Activated CD4-positive, alpha-beta memory T cell treated with anti-CD3 and anti-CD28 coated beads for 36 hours (primary cell): ENCODE measurements at regions of chr3 and their contacts with region 1.

Region 1: DNA sequence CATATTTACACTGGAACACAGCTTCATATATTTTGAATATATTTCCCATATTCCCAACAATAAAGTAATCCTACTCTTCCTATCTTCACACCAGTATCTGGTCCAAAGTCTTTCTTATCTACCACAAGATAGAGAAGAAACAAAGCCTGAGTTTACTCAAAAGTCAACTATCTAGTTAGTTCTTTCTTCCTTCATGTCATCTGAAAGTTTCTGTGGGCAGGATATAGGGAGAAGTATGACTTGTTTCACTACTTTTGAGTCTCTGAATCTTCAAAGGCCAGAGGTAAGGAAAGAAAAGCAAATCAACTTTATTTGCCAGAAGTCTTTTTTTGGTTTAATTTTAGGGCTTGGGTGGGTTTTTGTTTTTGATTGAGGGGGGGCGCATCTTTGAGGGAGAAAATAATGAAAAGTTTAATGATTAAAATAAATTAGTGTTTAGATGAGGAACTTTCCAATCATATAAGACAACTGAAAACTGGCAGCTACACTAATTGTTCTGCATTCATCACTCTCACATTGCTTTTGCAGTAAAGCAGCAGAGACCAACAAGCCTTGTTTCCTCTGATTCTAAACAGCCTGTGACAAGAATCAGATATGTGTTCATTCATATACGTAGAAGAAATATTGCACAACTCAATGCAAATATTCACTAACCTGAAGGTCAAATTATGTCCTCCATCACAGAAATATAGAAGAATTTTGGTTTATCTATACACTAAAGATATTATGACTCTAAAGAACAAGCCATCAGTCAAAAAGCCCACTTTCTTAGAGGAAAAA is 421.4 kb downstream of the SHQ1 start:
- DNase-seq: no peak
- H3K4me3 Mint-ChIP-seq: peak overlapping the region; percentile 23
- H3K27ac Mint-ChIP-seq: peak overlapping the region; percentile 82
- H3K4me1 Mint-ChIP-seq: peaks cover 78% of the 10 kb centered on the region
- H3K27me3 Mint-ChIP-seq: no peaks in the 10 kb centered on the region

Region 2: GRCh38 chr3:72123908-72124441 is 302.8 kb before region 1 on chr3:
- CTCF ChIA-PET with region 1: no interaction called
- POLR2A ChIA-PET with region 1: no interaction called
- intact Hi-C with region 1: no loop called
- DNase-seq: peak; percentile 73
- H3K4me3 Mint-ChIP-seq: no peak overlapping the region
- H3K27ac Mint-ChIP-seq: no peak overlapping the region
- H3K4me1 Mint-ChIP-seq: peaks cover 13% of the 10 kb centered on the region
- H3K27me3 Mint-ChIP-seq: no peaks in the 10 kb centered on the region

Region 3: DNA sequence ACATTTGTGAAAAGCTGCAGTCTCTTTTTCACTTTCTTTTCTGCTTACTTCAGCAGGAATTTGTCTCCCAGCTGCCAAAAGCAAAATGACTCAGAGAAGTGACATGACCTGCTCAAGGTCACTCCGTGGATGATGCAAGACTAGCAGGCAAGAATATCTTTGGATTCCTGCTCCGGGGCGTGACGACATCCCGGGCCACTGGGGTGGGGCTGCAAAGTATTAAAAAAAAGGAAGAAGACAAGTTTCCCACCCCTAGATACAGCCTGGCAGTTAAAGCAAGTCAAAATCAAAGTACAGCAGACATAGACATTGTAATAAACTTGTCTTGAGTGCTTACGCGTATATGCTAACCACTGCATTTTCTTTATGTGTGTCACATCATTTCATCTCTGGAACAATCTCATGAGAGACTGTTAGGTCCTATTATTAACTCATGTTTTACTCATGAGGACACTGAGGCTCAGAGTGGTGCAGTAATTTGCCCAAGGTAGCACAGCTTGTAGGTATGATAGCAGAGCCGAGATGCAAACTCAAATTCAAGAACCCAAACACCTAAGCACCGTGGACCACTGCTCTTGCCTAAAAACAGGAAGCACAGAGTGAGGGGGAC is 156.6 kb before region 1 on chr3:
- CTCF ChIA-PET with region 1: no interaction called
- POLR2A ChIA-PET with region 1: no interaction called
- intact Hi-C with region 1: loop called (anchors 5 kb)
- DNase-seq: peak; percentile 47
- H3K4me3 Mint-ChIP-seq: no peak overlapping the region
- H3K27ac Mint-ChIP-seq: peak overlapping the region; percentile 64
- H3K4me1 Mint-ChIP-seq: peaks cover 55% of the 10 kb centered on the region
- H3K27me3 Mint-ChIP-seq: peaks cover 1% of the 10 kb centered on the region

Region 4: DNA sequence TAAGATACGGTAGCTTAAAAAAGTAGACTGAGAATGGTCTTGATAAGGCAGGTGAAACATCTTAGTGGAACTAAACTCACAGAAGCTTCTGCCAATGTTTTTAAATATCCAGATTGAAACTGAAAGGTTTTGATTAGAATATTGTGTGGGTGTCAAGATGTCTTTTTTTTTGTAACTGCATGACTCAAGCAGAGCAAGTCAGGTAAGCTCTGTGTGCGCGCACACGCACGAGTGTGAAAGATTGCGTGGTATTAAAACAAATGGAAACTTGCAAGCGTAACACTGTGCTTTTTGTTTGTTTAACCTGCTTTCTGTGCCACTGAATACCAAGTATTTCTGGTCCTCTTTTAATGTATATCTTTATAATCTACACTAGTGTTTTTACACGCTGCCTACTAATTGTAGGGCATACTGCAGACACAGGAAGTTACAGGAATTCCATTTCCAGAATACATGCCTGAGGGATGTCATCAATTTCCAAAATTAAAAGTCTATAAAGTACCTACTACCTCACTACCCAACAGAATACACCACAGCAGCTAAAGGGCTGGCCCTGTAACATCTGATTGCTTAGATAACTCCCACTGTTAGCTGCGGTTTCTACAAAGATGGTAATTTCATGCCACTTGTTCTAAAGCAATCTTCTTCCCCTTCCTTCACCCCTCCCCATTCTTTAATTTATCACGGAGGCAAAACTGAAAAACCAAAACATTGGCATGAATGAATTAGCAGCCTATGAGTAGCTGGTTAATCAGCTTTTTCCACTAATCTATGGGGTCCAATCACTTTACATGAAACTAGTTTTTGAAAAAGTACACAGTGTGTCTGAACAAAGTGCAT is 51.4 kb before region 1 on chr3:
- CTCF ChIA-PET with region 1: interaction called, 3 read pairs
- POLR2A ChIA-PET with region 1: no interaction called
- intact Hi-C with region 1: loop called (anchors 2 kb)
- DNase-seq: peak; percentile 70
- H3K4me3 Mint-ChIP-seq: peak overlapping the region; percentile 6
- H3K27ac Mint-ChIP-seq: peak overlapping the region; percentile 86
- H3K4me1 Mint-ChIP-seq: peaks cover 65% of the 10 kb centered on the region
- H3K27me3 Mint-ChIP-seq: no peaks in the 10 kb centered on the region

Region 5: GRCh38 chr3:72413228-72413627 is 13.6 kb before region 1 on chr3:
- CTCF ChIA-PET with region 1: no interaction called
- POLR2A ChIA-PET with region 1: interaction called, 6 read pairs
- intact Hi-C with region 1: loop called (anchors 1 kb)
- DNase-seq: no peak
- H3K4me3 Mint-ChIP-seq: no peak overlapping the region
- H3K27ac Mint-ChIP-seq: no peak overlapping the region
- H3K4me1 Mint-ChIP-seq: peaks cover 84% of the 10 kb centered on the region
- H3K27me3 Mint-ChIP-seq: no peaks in the 10 kb centered on the region

Region 6: DNA sequence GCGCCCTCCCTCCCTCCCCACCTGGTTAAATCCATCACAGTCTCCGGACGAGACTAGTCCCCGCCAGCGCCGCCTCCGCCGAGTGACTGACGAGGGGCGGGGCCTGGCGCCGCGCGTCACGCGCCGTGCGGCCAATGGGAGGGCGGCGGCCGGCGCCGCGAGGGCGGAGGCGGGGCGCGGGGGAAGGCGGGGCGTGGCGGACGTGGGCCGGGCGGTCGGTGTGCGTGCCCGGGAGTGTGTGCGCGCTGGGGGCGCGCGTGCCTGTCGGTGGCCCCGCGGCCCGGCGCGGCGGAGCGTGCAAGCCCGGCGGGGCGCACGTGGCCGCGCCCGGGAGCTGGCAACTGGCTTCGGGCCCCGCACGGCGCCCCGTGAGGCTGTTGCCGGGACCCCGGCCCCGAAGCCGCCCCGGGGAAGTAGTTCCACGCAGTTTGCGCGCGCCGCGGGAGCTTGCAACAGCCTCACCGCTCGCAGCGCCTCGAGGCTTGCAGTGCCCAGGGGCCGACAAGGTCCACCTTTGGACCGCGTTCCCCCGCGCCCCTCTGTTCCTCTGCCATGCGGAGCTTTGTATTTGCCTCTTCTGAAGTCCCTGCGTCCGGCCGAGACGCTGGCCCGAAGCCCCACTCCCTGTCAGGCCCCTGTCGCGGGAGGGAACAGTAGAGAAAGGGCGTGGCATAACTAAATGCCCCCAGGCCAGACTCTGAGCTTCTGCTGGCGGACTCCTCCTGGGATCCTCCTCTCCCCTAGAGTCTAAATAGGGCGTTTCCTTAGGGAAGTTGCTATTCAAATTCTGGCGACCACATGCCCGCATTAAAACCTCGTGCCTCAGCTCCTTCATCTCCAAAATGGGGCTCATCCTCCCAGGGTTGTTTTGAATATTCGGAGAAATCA is 20.5 kb after region 1 on chr3:
- CTCF ChIA-PET with region 1: interaction called, 4 read pairs
- POLR2A ChIA-PET with region 1: interaction called, 4 read pairs
- intact Hi-C with region 1: loop called (anchors 2 kb)
- DNase-seq: peak; percentile 93
- H3K4me3 Mint-ChIP-seq: peak overlapping the region; percentile 61
- H3K27ac Mint-ChIP-seq: no peak overlapping the region
- H3K4me1 Mint-ChIP-seq: peaks cover 34% of the 10 kb centered on the region
- H3K27me3 Mint-ChIP-seq: peaks cover 23% of the 10 kb centered on the region

Region 7: GRCh38 chr3:73602170-73602569 is 1175.4 kb after region 1 on chr3:
- CTCF ChIA-PET with region 1: no interaction called
- POLR2A ChIA-PET with region 1: no interaction called
- intact Hi-C with region 1: no loop called
- DNase-seq: no peak
- H3K4me3 Mint-ChIP-seq: no peak overlapping the region
- H3K27ac Mint-ChIP-seq: no peak overlapping the region
- H3K4me1 Mint-ChIP-seq: no peaks in the 10 kb centered on the region
- H3K27me3 Mint-ChIP-seq: no peaks in the 10 kb centered on the region